Heart left ventricle (tissue), 16 donors: ENCODE measurements at regions of chr9 and their contacts with region 1.

Region 1: DNA sequence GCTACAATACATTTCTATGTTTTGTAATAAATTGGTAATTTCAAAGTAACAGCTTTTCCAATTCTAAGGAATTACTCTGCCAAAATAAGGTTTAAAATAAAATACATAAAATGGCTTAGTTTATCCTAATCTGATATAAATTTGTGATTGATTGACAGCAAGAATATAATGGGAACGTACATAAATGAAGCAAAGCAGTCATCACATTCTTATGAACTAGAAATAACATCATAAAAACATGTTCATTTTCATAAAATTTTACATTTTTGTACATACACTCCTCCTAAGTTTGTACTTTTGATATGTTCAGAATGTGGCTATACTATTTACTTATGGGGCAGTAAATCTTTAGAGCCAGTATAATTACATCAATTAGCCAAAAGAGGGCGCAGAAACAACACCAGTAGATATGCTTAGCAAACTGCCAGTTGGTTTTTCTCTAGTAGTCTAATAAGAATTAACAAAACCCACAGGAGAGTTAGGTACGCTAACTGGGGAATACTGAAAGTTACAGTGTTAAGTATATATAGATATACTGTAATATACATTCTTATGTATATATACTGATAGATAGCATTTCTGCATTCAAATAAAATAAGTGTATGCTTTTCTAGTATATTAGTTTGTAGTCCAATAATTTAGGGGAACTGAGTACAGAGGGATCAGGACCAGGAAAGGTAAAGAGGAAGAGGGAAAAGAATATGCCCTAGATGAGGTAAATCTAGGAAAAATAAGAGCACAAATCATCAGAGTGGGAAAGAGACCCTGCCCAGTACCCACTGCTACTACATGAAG is 76.8 kb downstream of the ZDHHC21 start:
- DNase-seq: no peak
- ATAC-seq: no peak
- H3K4me3 ChIP-seq: no peak overlapping the region
- H3K27ac ChIP-seq: no peak overlapping the region
- H3K4me1 ChIP-seq: no peaks in the 10 kb centered on the region
- H3K27me3 ChIP-seq: no peaks in the 10 kb centered on the region
- CTCF ChIP-seq: peak; percentile 35 to 74 (median 62)
- POLR2A ChIP-seq: no peak

Region 2: DNA sequence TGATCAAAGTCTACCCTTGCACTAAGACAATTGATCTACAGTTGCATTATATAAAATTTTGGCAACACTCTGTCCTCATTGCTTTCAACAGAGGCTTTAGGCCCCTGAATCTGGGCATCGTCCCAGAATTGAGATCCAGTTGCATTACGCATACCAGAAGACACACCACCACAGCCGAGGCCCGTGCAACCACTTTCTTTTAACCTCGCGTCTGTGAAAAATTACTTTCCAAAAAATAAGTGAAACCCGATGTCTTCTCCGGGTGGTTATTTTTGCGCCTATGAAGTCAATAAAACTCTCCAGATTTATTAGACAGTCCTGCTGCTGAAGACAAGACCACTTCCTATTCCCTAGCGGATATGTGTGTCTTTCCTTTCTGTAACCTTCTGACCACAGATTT is 250.3 kb before region 1 on chr9:
- intact Hi-C with region 1: no loop called
- DNase-seq: peak; percentile 35 to 73 (median 57)
- ATAC-seq: peak in 3 of 4 donors; percentile 53 to 83 (median 71)
- H3K4me3 ChIP-seq: peak overlapping the region in 1 of 12 donors; percentile 14
- H3K27ac ChIP-seq: peak overlapping the region in 9 of 12 donors; percentile 12 to 62 (median 42)
- H3K4me1 ChIP-seq: peaks cover 0 to 16% (median 0%) of the 10 kb centered on the region in 12 donors
- H3K27me3 ChIP-seq: no peaks in the 10 kb centered on the region
- CTCF ChIP-seq: no peak
- POLR2A ChIP-seq: no peak

Region 3: GRCh38 chr9:14768405-14769229 is 152.2 kb after region 1 on chr9:
- intact Hi-C with region 1: loop called (anchors 1 to 5 kb)
- DNase-seq: no peak
- ATAC-seq: peak in 3 of 4 donors; percentile 27 to 52 (median 42)
- H3K4me3 ChIP-seq: no peak overlapping the region
- H3K27ac ChIP-seq: no peak overlapping the region
- H3K4me1 ChIP-seq: peaks cover 0 to 4% (median 0%) of the 10 kb centered on the region in 12 donors
- H3K27me3 ChIP-seq: no peaks in the 10 kb centered on the region
- CTCF ChIP-seq: peak; percentile 64 to 83 (median 69)
- POLR2A ChIP-seq: no peak

Region 4: GRCh38 chr9:15127831-15128230 is 511.4 kb after region 1 on chr9:
- intact Hi-C with region 1: loop called in 3 of 10 experiments (anchors 5 to 10 kb)
- DNase-seq: no peak
- ATAC-seq: no peak
- H3K4me3 ChIP-seq: no peak overlapping the region
- H3K27ac ChIP-seq: no peak overlapping the region
- H3K4me1 ChIP-seq: no peaks in the 10 kb centered on the region
- H3K27me3 ChIP-seq: peaks cover 0 to 6% (median 0%) of the 10 kb centered on the region in 9 donors
- CTCF ChIP-seq: no peak
- POLR2A ChIP-seq: no peak

Region 5: GRCh38 chr9:15135164-15135792 is 518.9 kb after region 1 on chr9:
- intact Hi-C with region 1: loop called in 3 of 10 experiments (anchors 5 to 10 kb)
- DNase-seq: peak in 4 of 5 donors; percentile 38 to 48 (median 44)
- ATAC-seq: peak; percentile 63 to 92 (median 84)
- H3K4me3 ChIP-seq: peak overlapping the region in 4 of 12 donors; percentile 12 to 23 (median 22)
- H3K27ac ChIP-seq: no peak overlapping the region
- H3K4me1 ChIP-seq: peaks cover 0 to 8% (median 0%) of the 10 kb centered on the region in 12 donors
- H3K27me3 ChIP-seq: no peaks in the 10 kb centered on the region
- CTCF ChIP-seq: peak; percentile 75 to 96 (median 88)
- POLR2A ChIP-seq: no peak